A673 (cell line): ENCODE measurements at regions of chr12 and their contacts with region 1.

Region 1: DNA sequence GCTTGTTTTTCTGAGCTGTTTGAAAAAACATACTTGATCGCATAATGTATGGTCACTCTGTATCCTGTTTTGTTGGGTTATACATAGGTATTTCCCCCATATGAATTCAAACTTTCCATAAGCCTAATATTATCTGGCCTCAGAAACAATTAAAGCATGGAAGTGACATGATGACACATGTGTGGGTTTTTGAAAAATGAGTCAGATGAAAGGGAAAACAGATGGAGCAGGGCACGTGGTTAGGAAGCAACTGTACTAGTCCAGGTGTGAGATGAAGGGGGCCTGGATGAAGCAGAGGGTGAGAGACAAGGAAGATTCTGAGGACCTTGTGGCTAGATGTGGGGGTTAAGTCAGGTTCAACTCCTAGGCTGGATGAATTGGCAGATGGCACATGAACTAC is 92.7 kb upstream of the DNM1L start:
- DNase-seq: no peak
- H3K4me3 ChIP-seq: no peak overlapping the region
- H3K27ac ChIP-seq: peak overlapping the region; percentile 13
- H3K4me1 ChIP-seq: peaks cover 34% of the 10 kb centered on the region
- H3K27me3 ChIP-seq: no peaks in the 10 kb centered on the region
- CTCF ChIP-seq: no peak

Region 2: DNA sequence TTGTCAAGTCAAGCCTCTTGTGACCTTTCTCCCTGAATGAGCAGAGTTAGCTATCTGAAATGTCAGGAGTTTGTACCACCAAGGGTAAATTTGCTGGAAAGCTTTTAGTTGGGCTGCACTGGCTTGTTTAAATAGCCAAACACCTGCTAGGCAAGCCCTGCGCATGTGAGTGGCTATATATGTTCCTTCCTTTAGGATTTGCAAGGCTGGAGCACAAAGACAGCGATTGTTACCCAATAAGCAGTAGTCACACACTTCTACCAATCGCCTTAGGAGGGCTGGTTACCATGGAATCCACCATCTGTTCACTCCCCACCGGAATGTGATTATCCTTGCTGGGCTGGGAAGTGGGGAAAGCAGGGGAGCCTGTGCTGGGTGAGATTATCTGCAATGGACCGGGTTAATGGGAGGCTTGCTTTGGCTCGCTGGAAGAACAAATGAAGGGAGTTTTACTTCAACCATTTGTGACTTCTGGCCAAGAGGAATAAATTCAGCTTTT is 84.5 kb before region 1 on chr12:
- CTCF ChIA-PET with region 1: no interaction called
- POLR2A ChIA-PET with region 1: no interaction called
- intact Hi-C with region 1: loop called (anchors 5 kb)
- DNase-seq: peak; percentile 96
- H3K4me3 ChIP-seq: peak overlapping the region; percentile 47
- H3K27ac ChIP-seq: peak overlapping the region; percentile 49
- H3K4me1 ChIP-seq: peaks cover 39% of the 10 kb centered on the region
- H3K27me3 ChIP-seq: no peaks in the 10 kb centered on the region
- CTCF ChIP-seq: no peak

Region 3: DNA sequence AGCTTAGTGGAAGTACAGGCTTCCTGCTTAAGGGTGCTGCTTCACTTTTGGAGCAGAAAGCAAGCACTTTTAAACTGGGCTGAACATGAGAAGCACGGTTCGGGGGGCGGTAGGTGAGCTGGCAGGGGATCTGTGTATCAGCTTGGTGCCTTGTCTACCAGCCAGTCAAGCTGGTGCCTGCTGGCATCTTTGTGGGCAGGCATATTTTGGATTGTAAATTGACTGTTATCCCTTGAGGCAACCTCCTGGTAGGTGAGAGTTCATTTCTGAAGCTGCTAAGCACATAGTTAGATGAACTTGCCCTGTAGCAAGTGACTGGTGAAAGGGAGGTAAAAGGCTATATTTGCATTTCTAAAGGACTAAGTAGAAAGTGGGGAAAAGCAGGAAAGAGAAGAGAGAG is 974.3 kb after region 1 on chr12:
- CTCF ChIA-PET with region 1: no interaction called
- POLR2A ChIA-PET with region 1: no interaction called
- intact Hi-C with region 1: no loop called
- DNase-seq: no peak
- H3K4me3 ChIP-seq: no peak overlapping the region
- H3K27ac ChIP-seq: no peak overlapping the region
- H3K4me1 ChIP-seq: no peaks in the 10 kb centered on the region
- H3K27me3 ChIP-seq: no peaks in the 10 kb centered on the region
- CTCF ChIP-seq: no peak